H1 (cell line): ENCODE measurements at regions of chr16 and their contacts with region 1.

Region 1: GRCh38 chr16:20741554-20742285 is at the start of gene THUMPD1:
- DNase-seq: peak; percentile 88 to 98
- H3K4me3 ChIP-seq: peak within 1 kb of the TSS; percentile 88 to 95 (median 92)
- H3K27ac ChIP-seq: peak within 1 kb of the TSS; percentile 85; the same call in 1 of the 2 replicates
- H3K4me1 ChIP-seq: no peaks in the 10 kb centered on the region; a peak in 2 of 7 replicates
- H3K27me3 ChIP-seq: no peaks in the 10 kb centered on the region
- CTCF ChIP-seq: no peak
- EP300 ChIP-seq: no peak
- POLR2A ChIP-seq: peak; percentile 4 to 92
- RAD21 ChIP-seq: peak in 1 of 2 experiments; percentile 12; a peak in 2 of 4 replicates
- total RNA-seq, gene THUMPD1: 46.9 and 49.4 TPM in 2 replicates

Region 2: GRCh38 chr16:20729141-20729540 is 12.6 kb before region 1 on chr16:
- CTCF ChIA-PET with region 1: interaction called, 3 read pairs
- POLR2A ChIA-PET with region 1: interaction called, 17 read pairs
- DNase-seq: no peak
- H3K4me3 ChIP-seq: no peak overlapping the region
- H3K27ac ChIP-seq: no peak overlapping the region
- H3K4me1 ChIP-seq: no peaks in the 10 kb centered on the region
- H3K27me3 ChIP-seq: no peaks in the 10 kb centered on the region; a peak in 1 of 7 replicates
- CTCF ChIP-seq: no peak
- EP300 ChIP-seq: no peak
- POLR2A ChIP-seq: no peak
- RAD21 ChIP-seq: no peak